BJ (cell line): ENCODE measurements at regions of chr20 and their contacts with region 1.

Region 1: DNA sequence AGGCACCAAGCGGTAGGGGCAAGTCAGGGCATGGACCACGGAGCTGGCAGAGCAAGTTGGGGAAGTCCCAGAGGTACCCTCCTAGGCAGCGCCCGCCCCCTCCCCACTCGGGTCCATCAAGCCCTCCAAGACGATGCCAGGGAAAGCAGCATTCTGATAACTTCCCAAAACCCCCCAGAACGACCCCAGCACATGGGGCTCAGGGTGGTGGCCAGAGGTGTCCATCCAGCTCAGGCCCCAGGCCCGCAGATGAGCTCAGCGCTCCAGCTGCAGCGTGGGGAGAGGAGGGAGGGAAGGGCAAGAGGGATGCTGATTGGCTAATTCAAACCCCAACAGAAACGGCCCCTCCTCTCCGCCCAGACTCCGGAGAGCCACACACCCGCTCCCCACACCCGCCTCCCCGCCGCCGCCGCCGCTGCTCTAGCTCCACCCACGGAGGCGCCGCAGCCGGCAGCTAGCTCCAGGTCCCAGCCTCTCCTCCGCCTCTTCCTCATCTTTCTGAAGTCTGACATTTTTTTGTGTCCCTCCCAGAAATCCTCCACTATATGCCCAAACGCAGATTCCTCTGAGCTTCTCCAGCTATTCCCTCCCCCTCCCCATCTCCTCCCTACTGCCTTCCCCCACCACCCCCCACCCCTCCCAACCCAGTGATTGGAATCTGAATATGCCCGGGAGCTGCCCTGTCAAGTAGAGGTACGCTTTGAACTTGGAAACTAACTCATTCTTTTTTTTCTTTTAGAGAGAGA is 40.3 kb upstream of the TLDC2 start:
- DNase-seq: peak; percentile 70
- H3K4me3 ChIP-seq: peak overlapping the region; percentile 13; the same call in 1 of the 2 replicates
- H3K27me3 ChIP-seq: no peaks in the 10 kb centered on the region
- CTCF ChIP-seq: no peak

Region 2: GRCh38 chr20:36541227-36541763 is 294.3 kb before region 1 on chr20 and contains the start of gene MYL9:
- CTCF ChIA-PET with region 1: no interaction called
- POLR2A ChIA-PET with region 1: no interaction called
- DNase-seq: peak; percentile 13
- H3K4me3 ChIP-seq: peak within 1 kb of the TSS; percentile 99
- H3K27me3 ChIP-seq: no peaks in the 10 kb centered on the region
- CTCF ChIP-seq: peak; percentile 11; the same call in 1 of the 2 replicates
- polyA plus RNA-seq, gene MYL9: 445 and 673 TPM in 2 replicates

Region 3: DNA sequence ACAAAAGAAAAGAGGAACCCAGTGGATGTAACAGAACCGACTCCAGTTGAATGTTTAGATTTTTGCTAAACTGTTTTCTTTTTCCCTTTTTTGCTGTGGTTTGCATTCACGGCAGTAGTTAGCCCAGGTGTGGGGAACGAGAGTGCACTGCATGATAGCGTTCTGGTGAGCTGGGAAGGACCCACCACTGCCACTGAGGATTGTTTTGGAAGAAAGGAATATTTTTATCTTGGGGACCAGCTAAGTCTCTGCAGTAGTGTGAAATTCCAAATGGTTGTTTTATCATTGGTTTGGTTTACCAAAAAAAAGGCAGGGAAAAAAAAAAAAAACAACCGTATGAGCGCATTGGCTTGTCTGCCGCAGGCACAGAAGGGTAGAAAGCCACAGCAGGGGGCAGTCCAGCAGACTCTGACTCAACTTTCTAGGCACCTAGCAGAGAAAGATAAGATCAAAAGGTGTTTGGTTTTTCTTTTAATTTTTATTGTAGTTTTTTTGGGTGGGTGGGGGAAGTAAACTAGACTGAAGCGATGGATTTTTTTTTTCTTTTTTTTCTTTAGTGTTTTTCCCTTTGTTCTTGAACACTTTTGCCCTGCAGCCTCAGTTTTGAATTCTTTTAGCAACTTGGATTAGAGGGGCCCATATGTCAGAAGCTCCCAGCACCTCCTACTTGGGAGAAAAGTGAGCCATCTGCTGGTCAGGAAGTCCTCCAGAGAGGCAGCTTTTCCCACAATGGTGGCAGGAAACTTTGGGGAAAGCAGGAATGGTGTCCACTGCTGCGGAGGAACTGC is 243.6 kb before region 1 on chr20:
- CTCF ChIA-PET with region 1: no interaction called
- POLR2A ChIA-PET with region 1: interaction called, 17 read pairs
- DNase-seq: no peak
- H3K4me3 ChIP-seq: no peak overlapping the region
- H3K27me3 ChIP-seq: no peaks in the 10 kb centered on the region
- CTCF ChIP-seq: peak; percentile 61

Region 4: GRCh38 chr20:36847009-36847709 is 11.5 kb after region 1 on chr20:
- CTCF ChIA-PET with region 1: interaction called, 30 read pairs
- POLR2A ChIA-PET with region 1: interaction called, 3 read pairs
- DNase-seq: no peak
- H3K4me3 ChIP-seq: no peak overlapping the region
- H3K27me3 ChIP-seq: no peaks in the 10 kb centered on the region
- CTCF ChIP-seq: no peak

Region 5: DNA sequence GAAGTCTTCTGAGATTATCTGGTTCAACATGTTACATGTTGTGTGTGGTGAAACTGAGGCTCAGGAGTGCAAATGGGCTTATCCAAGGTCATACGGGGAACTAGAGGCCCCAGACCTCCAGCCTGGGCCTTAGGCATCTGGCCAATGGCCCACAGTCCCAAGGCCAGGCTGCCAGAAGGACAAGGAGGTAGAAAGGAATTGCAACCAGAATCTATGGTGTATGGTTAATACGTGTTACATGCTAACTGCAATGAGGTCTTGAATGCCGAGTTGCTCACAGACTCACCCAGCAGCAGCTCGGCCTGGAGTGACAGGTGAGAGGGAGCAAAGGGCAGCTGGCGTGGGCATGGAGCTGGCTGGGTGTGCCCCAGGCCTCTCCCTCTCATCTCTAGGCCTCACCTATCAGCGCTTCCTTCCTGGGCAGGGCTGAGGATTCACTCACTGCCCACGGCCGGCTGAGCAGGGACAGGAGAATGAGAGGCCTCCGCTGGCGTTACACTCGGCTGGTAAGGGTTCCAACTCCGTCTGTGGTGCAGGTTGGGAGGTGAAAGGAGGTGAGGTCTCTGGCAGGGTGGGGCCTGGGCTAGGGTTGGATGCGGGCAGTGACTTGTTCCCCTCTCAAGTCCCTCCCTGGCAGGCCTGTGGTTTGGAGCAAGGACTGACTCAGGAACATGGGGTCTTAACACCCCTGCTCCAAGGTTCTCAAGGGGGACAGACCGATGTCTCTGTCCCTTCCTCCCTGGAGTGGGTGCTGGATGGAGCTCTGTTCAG is 40.3 kb after region 1 on chr20 and contains the start of gene TLDC2:
- CTCF ChIA-PET with region 1: no interaction called
- POLR2A ChIA-PET with region 1: interaction called, 14 read pairs
- DNase-seq: no peak
- H3K4me3 ChIP-seq: no peak within 1 kb of the TSS
- H3K27me3 ChIP-seq: peaks cover 2% of the 10 kb centered on the region; the same call in 1 of the 2 replicates
- CTCF ChIP-seq: no peak
- polyA plus RNA-seq, gene TLDC2: 0.37 and 0.54 TPM in 2 replicates